Naive thymus-derived CD4-positive, alpha-beta T cell (primary cell): ENCODE measurements at regions of chr12 and their contacts with region 1.

Region 1: GRCh38 chr12:122500685-122501488 is at the start of gene ZCCHC8:
- DNase-seq: peak; percentile 83 to 97 (median 94)
- ATAC-seq: peak; percentile 96
- H3K4me3 ChIP-seq: peak within 1 kb of the TSS; percentile 97
- H3K4me3 Mint-ChIP-seq: peak within 1 kb of the TSS; percentile 83 to 99 (median 96)
- H3K27ac ChIP-seq: peak within 1 kb of the TSS; percentile 92
- H3K27ac Mint-ChIP-seq: peak within 1 kb of the TSS; percentile 89 to 98 (median 96)
- H3K4me1 ChIP-seq: peaks cover 9 to 15% of the 10 kb centered on the region in 2 donors
- H3K4me1 Mint-ChIP-seq: peaks cover 22 to 47% (median 39%) of the 10 kb centered on the region in 7 donors
- H3K27me3 ChIP-seq: no peaks in the 10 kb centered on the region
- H3K27me3 Mint-ChIP-seq: no peaks in the 10 kb centered on the region
- total RNA-seq, gene ZCCHC8: 44.4 to 54.0 (median 46.8) TPM

Region 2: DNA sequence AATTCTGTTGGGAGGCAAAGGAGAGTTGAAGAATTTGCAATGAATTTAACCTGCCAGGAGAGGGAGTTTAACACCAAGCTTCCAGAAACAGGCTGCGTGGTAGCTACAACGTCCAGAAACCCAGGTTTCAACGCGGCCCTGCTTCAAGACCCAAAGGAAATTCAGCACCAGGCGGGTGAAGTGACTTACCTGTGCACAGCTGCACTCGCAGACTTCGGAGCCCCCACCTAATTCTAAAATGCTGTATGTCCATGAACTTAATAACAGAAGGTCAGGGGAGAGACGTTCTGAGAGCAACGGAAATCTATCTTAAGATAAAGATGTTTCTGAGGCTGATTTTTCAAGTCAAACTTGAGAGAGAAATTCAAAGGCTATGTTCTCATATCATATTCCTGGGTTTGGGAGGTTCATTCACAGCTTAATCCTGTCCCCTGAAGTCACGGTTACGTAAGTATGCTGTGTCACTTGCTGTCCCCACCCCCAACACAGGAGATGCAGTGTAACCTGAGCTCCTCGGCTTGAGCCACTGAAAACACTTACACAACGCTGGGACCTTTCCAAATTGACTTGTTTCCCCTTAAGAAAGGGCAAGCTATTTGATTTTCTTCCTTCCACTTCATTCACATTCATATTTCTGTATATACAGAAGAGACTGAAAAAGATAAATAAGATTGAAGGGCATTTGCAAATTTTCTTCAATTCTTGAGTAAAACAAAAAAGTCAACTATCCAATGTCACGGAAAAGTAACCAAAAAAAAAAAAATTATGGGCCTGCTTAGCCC is 101.1 kb before region 1 on chr12:
- CTCF ChIA-PET with region 1: interaction called, 9 read pairs
- POLR2A ChIA-PET with region 1: interaction called, 5 read pairs
- intact Hi-C with region 1: loop called in 1 of 2 experiments (anchors 1 kb)
- DNase-seq: peak in 8 of 9 donors; percentile 27 to 76 (median 65)
- ATAC-seq: peak; percentile 77
- H3K4me3 ChIP-seq: no peak overlapping the region
- H3K4me3 Mint-ChIP-seq: peak overlapping the region; percentile 40 to 80 (median 69)
- H3K27ac ChIP-seq: peak overlapping the region; percentile 56
- H3K27ac Mint-ChIP-seq: peak overlapping the region; percentile 83 to 96 (median 89)
- H3K4me1 ChIP-seq: peaks cover 0 to 6% of the 10 kb centered on the region in 2 donors
- H3K4me1 Mint-ChIP-seq: peaks cover 24 to 50% (median 39%) of the 10 kb centered on the region in 7 donors
- H3K27me3 ChIP-seq: no peaks in the 10 kb centered on the region
- H3K27me3 Mint-ChIP-seq: no peaks in the 10 kb centered on the region

Region 3: GRCh38 chr12:122421821-122422729 is 78.8 kb before region 1 on chr12 and contains the start of gene CLIP1:
- CTCF ChIA-PET with region 1: no interaction called
- POLR2A ChIA-PET with region 1: no interaction called
- intact Hi-C with region 1: loop called in 1 of 2 experiments (anchors 1 kb)
- DNase-seq: peak; percentile 40 to 73 (median 57)
- ATAC-seq: peak; percentile 84
- H3K4me3 ChIP-seq: peak within 1 kb of the TSS; percentile 71
- H3K4me3 Mint-ChIP-seq: peak within 1 kb of the TSS; percentile 91 to 97 (median 92)
- H3K27ac ChIP-seq: peak within 1 kb of the TSS; percentile 90
- H3K27ac Mint-ChIP-seq: peak within 1 kb of the TSS; percentile 83 to 93 (median 91)
- H3K4me1 ChIP-seq: peaks cover 17 to 20% of the 10 kb centered on the region in 2 donors
- H3K4me1 Mint-ChIP-seq: peaks cover 23 to 39% (median 35%) of the 10 kb centered on the region in 7 donors
- H3K27me3 ChIP-seq: no peaks in the 10 kb centered on the region
- H3K27me3 Mint-ChIP-seq: no peaks in the 10 kb centered on the region
- total RNA-seq, gene CLIP1: 54.7 to 89.3 (median 65.1) TPM

Region 4: DNA sequence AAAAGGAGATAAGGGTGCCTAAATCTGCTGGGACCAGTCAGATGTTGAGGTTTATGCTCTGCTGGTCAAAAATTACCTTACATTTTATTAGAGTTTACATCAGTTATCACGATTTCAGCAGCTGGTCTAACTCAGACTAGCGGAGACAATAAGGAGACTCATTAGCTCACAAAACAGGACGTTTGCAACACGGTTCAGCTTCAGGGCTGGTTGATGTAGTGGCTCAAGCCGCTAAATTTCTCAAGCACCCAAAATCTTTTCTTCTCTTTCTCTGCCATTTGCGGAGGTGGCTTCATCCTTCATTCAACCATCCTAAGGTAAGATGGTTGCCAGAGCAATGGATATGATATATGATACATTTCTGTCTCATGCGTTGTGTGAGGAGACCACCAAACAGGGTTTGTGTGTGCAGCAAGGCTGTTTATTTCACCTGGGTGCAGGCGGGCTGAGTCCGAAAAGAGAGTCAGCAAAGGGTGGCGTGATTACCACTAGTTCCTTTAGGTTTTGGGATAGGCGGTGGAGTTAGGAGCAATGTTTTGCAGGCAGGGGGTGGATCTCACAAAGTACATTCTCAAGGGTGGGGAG is 48.1 kb before region 1 on chr12:
- CTCF ChIA-PET with region 1: no interaction called
- POLR2A ChIA-PET with region 1: interaction called, 3 read pairs
- intact Hi-C with region 1: loop called (anchors 1 to 2 kb)
- DNase-seq: no peak
- ATAC-seq: no peak
- H3K4me3 ChIP-seq: peak overlapping the region; percentile 36
- H3K4me3 Mint-ChIP-seq: peak overlapping the region; percentile 64 to 87 (median 81)
- H3K27ac ChIP-seq: peak overlapping the region; percentile 63
- H3K27ac Mint-ChIP-seq: peak overlapping the region; percentile 91 to 99 (median 98)
- H3K4me1 ChIP-seq: peaks cover 22 to 24% of the 10 kb centered on the region in 2 donors
- H3K4me1 Mint-ChIP-seq: peaks cover 22 to 41% (median 33%) of the 10 kb centered on the region in 7 donors
- H3K27me3 ChIP-seq: no peaks in the 10 kb centered on the region
- H3K27me3 Mint-ChIP-seq: no peaks in the 10 kb centered on the region

Region 5: GRCh38 chr12:122463806-122464205 is 37.1 kb before region 1 on chr12:
- CTCF ChIA-PET with region 1: no interaction called
- POLR2A ChIA-PET with region 1: no interaction called
- intact Hi-C with region 1: no loop called
- DNase-seq: no peak
- ATAC-seq: no peak
- H3K4me3 ChIP-seq: no peak overlapping the region
- H3K4me3 Mint-ChIP-seq: no peak overlapping the region
- H3K27ac ChIP-seq: no peak overlapping the region
- H3K27ac Mint-ChIP-seq: peak overlapping the region in 1 of 9 donors; percentile 43
- H3K4me1 ChIP-seq: no peaks in the 10 kb centered on the region
- H3K4me1 Mint-ChIP-seq: no peaks in the 10 kb centered on the region
- H3K27me3 ChIP-seq: no peaks in the 10 kb centered on the region
- H3K27me3 Mint-ChIP-seq: no peaks in the 10 kb centered on the region

Region 6: DNA sequence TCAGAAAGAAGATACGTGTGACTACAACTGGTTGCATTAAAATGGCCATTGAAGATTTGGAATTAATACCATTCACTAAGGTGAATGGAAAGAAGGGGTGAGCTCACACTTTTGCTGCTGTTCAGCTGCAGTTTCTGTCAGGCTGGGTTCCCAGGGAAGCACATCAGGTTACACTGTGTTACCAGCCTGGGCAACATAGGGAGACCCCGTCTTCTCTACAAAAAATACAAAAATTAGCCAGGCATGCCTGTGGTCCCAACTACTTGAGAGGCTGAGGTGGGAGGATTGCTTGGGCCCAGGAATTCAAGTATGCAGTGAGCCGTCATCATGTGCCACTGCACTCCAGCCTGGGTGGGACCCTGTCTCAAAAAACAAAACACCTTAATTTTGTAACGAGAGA is 12.8 kb after region 1 on chr12:
- CTCF ChIA-PET with region 1: interaction called, 4 read pairs
- POLR2A ChIA-PET with region 1: interaction called, 31 read pairs
- intact Hi-C with region 1: no loop called
- DNase-seq: no peak
- ATAC-seq: no peak
- H3K4me3 ChIP-seq: no peak overlapping the region
- H3K4me3 Mint-ChIP-seq: no peak overlapping the region
- H3K27ac ChIP-seq: no peak overlapping the region
- H3K27ac Mint-ChIP-seq: peak overlapping the region in 3 of 9 donors; percentile 10 to 43 (median 38)
- H3K4me1 ChIP-seq: no peaks in the 10 kb centered on the region
- H3K4me1 Mint-ChIP-seq: peaks cover under 1 to 19% (median 8%) of the 10 kb centered on the region in 7 donors
- H3K27me3 ChIP-seq: no peaks in the 10 kb centered on the region
- H3K27me3 Mint-ChIP-seq: no peaks in the 10 kb centered on the region

Region 7: DNA sequence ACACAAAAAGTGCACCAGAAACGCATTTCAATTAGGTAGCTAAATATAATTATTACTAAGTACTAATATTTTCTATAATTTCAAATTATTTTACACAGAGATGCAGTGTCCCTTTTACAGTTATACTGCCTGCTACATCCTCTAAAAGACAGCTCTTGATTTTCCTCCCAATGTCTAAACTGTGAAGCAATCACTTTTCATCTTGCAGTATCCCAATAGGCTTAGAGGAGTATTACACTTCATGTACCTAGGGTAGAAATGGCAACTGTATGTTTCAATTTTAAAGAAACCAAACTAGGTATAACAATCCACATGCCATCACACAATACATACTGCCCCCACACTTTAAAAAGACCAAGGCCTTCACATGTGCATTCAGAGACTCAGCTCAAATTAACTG is 18.5 kb after region 1 on chr12:
- CTCF ChIA-PET with region 1: no interaction called
- POLR2A ChIA-PET with region 1: interaction called, 115 read pairs
- intact Hi-C with region 1: no loop called
- DNase-seq: no peak
- ATAC-seq: peak; percentile 25
- H3K4me3 ChIP-seq: no peak overlapping the region
- H3K4me3 Mint-ChIP-seq: peak overlapping the region in 2 of 10 donors; percentile 3 to 31
- H3K27ac ChIP-seq: no peak overlapping the region
- H3K27ac Mint-ChIP-seq: peak overlapping the region in 3 of 9 donors; percentile 9 to 50 (median 14)
- H3K4me1 ChIP-seq: peaks cover 18 to 35% of the 10 kb centered on the region in 2 donors
- H3K4me1 Mint-ChIP-seq: peaks cover 28 to 63% (median 58%) of the 10 kb centered on the region in 7 donors
- H3K27me3 ChIP-seq: no peaks in the 10 kb centered on the region
- H3K27me3 Mint-ChIP-seq: no peaks in the 10 kb centered on the region

Region 8: DNA sequence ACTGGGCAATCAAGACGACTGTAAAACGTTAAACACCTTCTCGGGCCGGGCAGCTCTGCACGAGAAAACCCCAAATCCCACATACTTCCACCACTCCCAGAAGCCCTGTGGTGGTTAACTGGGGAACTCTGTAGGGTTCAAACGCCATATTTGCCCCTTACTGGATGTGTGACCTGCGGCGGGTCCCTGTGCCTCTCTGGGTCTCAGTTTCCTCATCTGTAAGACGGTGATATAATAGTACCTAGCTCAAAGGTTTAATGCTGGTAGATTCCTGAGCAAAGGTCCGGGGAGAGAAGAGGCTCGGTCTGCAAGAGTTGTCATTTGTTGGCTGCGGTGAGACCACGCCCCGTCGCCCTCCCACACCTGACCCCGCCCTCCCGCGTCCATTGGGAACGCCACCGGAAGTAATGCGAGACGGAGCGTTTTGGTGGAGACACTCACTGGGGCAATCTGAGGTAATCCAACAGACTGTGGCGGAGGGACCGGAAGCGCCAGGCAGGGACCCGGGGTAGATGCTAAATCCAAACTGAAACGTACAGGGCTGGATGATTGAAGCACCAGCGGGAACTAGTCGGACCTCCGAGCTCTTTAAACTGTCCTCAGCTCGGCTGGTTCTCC is 473.5 kb after region 1 on chr12:
- CTCF ChIA-PET with region 1: no interaction called
- POLR2A ChIA-PET with region 1: interaction called, 3 read pairs
- intact Hi-C with region 1: loop called in 1 of 2 experiments (anchors 1 kb)
- DNase-seq: peak; percentile 92 to 98 (median 98)
- ATAC-seq: peak; percentile 92
- H3K4me3 ChIP-seq: peak overlapping the region; percentile 100
- H3K4me3 Mint-ChIP-seq: peak overlapping the region; percentile 92 to 99 (median 97)
- H3K27ac ChIP-seq: peak overlapping the region; percentile 98
- H3K27ac Mint-ChIP-seq: peak overlapping the region; percentile 99 to 100 (median 99)
- H3K4me1 ChIP-seq: peaks cover 18 to 23% of the 10 kb centered on the region in 2 donors
- H3K4me1 Mint-ChIP-seq: peaks cover 17 to 39% (median 30%) of the 10 kb centered on the region in 7 donors
- H3K27me3 ChIP-seq: no peaks in the 10 kb centered on the region
- H3K27me3 Mint-ChIP-seq: peaks cover 0 to 3% (median 0%) of the 10 kb centered on the region in 5 donors

Region 9: DNA sequence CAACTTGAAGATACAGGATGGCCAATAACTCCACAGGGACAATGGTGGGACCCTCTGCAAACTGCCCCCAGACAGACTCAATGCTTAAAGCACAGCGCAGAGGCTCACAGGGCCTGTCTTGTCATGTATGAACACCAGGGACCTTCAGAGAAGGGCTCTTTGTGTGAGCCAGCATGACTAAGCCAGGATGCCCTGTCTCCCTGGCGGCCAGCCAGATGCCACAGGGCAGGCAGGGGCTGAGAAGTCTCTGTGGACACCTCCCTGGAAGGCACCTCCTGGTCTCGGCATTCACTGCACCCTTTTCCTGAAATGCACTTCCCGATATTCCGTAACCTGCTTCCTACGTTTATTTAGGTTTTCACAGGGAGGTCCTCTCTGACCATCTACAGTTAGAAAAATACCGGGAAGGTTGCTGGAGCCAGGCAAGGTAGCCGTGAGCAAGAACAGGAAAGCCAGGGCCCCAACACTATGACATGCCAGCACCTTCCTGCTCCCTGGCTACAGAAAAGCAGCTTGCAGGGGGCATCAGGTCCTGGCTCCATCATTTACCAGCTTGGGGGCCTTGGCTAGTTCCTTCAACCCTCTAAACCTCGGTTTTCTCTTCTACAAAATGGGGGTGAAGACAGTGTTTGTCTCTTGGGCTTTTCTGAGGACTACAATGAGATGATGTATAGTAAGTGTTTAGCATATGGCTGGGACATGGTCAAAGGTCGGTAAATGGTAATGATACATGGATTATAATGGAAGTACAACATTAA is 585.0 kb after region 1 on chr12:
- CTCF ChIA-PET with region 1: no interaction called
- POLR2A ChIA-PET with region 1: no interaction called
- intact Hi-C with region 1: no loop called
- DNase-seq: no peak
- ATAC-seq: peak; percentile 46
- H3K4me3 ChIP-seq: no peak overlapping the region
- H3K4me3 Mint-ChIP-seq: no peak overlapping the region
- H3K27ac ChIP-seq: no peak overlapping the region
- H3K27ac Mint-ChIP-seq: peak overlapping the region in 4 of 9 donors; percentile 3 to 78 (median 46)
- H3K4me1 ChIP-seq: no peaks in the 10 kb centered on the region
- H3K4me1 Mint-ChIP-seq: peaks cover 10 to 52% (median 45%) of the 10 kb centered on the region in 7 donors
- H3K27me3 ChIP-seq: no peaks in the 10 kb centered on the region
- H3K27me3 Mint-ChIP-seq: no peaks in the 10 kb centered on the region